ENCODE measurements at regions of chr1 and their contacts with region 1.

Region 1: GRCh38 chr1:19918057-19918456 is 5.4 kb downstream of the PLA2G2E start:
- DNase-seq: peak; percentile 70 to 75
- H3K4me3 ChIP-seq: no peak overlapping the region
- H3K27ac ChIP-seq: no peak overlapping the region
- H3K4me1 ChIP-seq: no peaks in the 10 kb centered on the region
- H3K27me3 ChIP-seq: no peaks in the 10 kb centered on the region
- CTCF ChIP-seq: peak; percentile 85 to 86 (median 85)
- POLR2A ChIP-seq: no peak

Region 2: DNA sequence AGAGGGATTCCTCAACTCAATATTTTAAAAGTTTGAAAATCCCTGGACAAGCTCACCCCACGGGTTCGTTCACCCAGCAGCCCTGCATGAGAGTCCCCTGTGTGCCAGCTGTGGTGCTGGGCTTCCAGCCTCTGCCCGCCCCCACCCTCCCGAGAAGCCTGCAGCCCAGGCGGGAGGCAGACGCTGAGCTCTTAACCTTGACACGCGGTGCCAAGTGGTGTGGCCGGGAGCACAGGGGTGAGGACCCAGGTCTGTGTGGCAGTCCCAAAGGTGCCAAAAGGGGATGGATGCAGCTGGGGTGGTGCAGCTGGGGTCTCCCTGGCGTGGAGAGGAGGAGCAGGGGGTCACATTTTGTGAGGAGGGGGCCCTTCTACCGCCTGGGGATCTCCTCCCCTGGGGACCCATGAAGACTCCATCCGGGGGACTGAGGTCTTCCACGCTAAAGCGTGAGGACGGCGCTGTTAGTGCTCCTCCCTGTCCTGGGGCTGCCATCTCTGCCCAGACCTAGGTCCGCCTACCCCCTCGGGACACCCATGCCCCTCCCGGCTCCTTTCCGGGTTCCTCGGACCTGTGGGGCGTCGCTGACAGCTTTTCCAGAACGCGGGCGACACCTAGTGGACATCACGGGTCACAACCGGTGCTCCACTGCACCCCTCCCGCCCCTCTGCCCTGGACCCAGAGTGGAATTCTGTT is 234.0 kb after region 1 on chr1:
- intact Hi-C with region 1: loop called (anchors 10 kb)
- DNase-seq: peak; percentile 70 to 84
- H3K4me3 ChIP-seq: peak overlapping the region; percentile 23 to 68 (median 51)
- H3K27ac ChIP-seq: peak overlapping the region; percentile 83 to 89
- H3K4me1 ChIP-seq: peaks cover 5 to 7% of the 10 kb centered on the region in 2 donors
- H3K27me3 ChIP-seq: no peaks in the 10 kb centered on the region
- CTCF ChIP-seq: peak; percentile 80 to 98 (median 96)
- POLR2A ChIP-seq: no peak

Measured in breast epithelium (tissue), 4 donors.